AG04450 (cell line): ENCODE measurements at regions of chrX and their contacts with region 1.

Region 1: GRCh38 chrX:47144626-47145394 is at the starts of genes NDUFB11 and RBM10:
- DNase-seq: peak; percentile 86
- H3K4me3 ChIP-seq: peak within 1 kb of the TSS; percentile 79
- H3K27ac ChIP-seq: peak within 1 kb of the TSS; percentile 89
- H3K27me3 ChIP-seq: no peaks in the 10 kb centered on the region
- CTCF ChIP-seq: peak; percentile 65
- polyA plus RNA-seq, gene NDUFB11: 51.1 and 56.5 TPM in 2 replicates
- polyA plus RNA-seq, gene RBM10: 19.6 and 23.1 TPM in 2 replicates

Region 2: DNA sequence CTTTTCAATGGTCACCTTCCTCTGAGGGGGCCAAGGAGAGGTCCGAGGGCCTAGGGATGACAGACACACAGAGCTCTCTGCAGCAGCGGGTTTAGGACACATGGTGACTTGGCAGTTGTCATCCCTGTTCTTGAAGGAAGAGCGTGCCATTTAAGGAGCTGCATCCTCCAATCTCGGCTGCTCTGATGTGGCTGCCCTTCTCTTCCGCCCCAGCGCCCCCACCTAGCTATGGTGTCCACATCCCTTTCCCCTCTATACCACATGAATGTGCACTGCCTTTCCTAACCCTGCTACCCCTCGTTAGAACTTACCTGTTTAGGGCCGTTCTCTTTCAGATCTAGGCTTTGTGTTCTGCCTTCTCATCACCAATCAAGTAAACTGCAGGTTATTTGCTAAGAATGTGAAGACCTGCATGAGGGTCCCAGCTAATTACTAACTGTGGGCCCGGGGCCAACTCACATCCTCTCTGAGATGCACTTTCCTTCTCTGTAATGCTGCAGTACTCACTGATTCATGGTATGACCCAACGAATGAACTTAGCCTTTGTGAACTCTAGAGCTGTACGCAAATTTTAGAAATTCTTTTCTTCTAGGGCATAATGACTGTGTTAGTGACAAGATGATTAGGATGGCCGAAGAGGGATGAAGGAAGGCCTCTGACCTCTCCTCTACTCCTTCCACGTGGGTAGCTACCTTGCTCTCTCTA is 533.0 kb before region 1 on chrX:
- CTCF ChIA-PET with region 1: no interaction called
- POLR2A ChIA-PET with region 1: no interaction called
- DNase-seq: no peak
- H3K4me3 ChIP-seq: no peak overlapping the region
- H3K27ac ChIP-seq: no peak overlapping the region
- H3K27me3 ChIP-seq: no peaks in the 10 kb centered on the region
- CTCF ChIP-seq: no peak

Region 3: GRCh38 chrX:47129157-47129898 is 15.5 kb before region 1 on chrX:
- CTCF ChIA-PET with region 1: interaction called, 16 read pairs
- POLR2A ChIA-PET with region 1: interaction called, 5 read pairs
- DNase-seq: peak; percentile 87
- H3K4me3 ChIP-seq: peak overlapping the region; percentile 72
- H3K27ac ChIP-seq: peak overlapping the region; percentile 11
- H3K27me3 ChIP-seq: no peaks in the 10 kb centered on the region
- CTCF ChIP-seq: no peak